ENCODE measurements at regions of chr16 and their contacts with region 1.

Region 1: GRCh38 chr16:14300705-14301168 is 229.6 kb downstream of the MRTFB start:
- DNase-seq: peak in 6 of 10 donors; percentile 62 to 70 (median 64)
- H3K4me3 ChIP-seq: peak overlapping the region in 53 of 59 donors; percentile 13 to 93 (median 85)
- H3K27ac ChIP-seq: peak overlapping the region in 25 of 59 donors; percentile 3 to 83 (median 59)
- H3K27me3 ChIP-seq: no peaks in the 10 kb centered on the region
- CTCF ChIP-seq: peak in 55 of 56 donors; percentile 34 to 78 (median 63)

Region 2: GRCh38 chr16:14219983-14220382 is 80.8 kb before region 1 on chr16:
- intact Hi-C with region 1: no loop called
- DNase-seq: no peak
- H3K4me3 ChIP-seq: no peak overlapping the region
- H3K27ac ChIP-seq: no peak overlapping the region
- H3K27me3 ChIP-seq: no peaks in the 10 kb centered on the region
- CTCF ChIP-seq: no peak

Region 3: GRCh38 chr16:14427371-14427948 is 126.7 kb after region 1 on chr16:
- intact Hi-C with region 1: loop called (anchors 10 kb)
- DNase-seq: peak in 8 of 10 donors; percentile 49 to 83 (median 68)
- H3K4me3 ChIP-seq: peak overlapping the region in 16 of 59 donors; percentile 1 to 36 (median 16)
- H3K27ac ChIP-seq: peak overlapping the region; percentile 58 to 97 (median 93)
- H3K27me3 ChIP-seq: no peaks in the 10 kb centered on the region
- CTCF ChIP-seq: peak in 2 of 56 donors; percentile 12 to 38